ENCODE measurements at regions of chr3 and their contacts with region 1.

Region 1: DNA sequence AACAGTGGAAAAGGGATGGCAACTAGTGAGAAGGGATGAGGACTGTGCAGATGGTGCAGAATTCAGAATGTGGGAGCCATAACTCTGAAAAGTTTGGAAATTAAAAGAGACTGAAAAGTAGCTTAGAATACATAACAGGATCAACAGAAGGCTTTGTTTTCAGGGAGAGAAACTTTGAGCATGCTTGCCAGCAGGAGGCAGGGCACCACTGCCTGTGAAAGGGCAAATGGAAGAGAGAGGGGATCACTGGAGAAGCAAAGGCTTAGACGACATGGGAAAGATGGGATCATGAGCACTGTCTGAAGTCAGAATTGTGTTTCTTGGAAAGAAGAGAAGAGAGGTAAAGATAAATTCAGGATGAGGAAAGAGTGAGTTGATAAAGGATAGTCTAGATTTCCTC is 99.6 kb downstream of the ABI3BP start:
- DNase-seq: peak; percentile 50
- H3K4me3 Mint-ChIP-seq: no peak overlapping the region
- H3K27ac Mint-ChIP-seq: no peak overlapping the region
- H3K4me1 Mint-ChIP-seq: peaks cover 22% of the 10 kb centered on the region
- H3K27me3 Mint-ChIP-seq: no peaks in the 10 kb centered on the region
- CTCF ChIP-seq: peak; percentile 59

Region 2: DNA sequence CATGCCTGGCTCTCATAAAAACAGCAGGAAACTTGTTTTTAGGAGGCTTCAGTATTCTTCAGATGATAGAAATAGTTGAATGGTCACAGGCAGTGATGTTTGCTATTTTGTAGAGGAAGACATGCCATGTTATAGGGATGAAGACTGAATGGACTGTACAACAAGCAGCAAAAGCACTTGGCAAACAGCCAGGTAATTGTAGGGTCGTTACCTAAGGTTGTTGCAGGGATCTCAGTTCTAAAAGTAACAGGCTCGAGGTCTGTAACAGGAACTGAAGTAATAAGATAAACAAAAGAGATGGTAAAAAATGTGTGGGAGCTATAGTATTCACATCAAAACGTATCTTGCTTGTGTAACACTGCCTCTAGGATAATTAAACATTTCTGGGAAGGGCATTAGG is 68.0 kb before region 1 on chr3:
- CTCF ChIA-PET with region 1: no interaction called
- POLR2A ChIA-PET with region 1: no interaction called
- intact Hi-C with region 1: loop called (anchors 5 kb)
- DNase-seq: peak; percentile 23
- H3K4me3 Mint-ChIP-seq: no peak overlapping the region
- H3K27ac Mint-ChIP-seq: no peak overlapping the region
- H3K4me1 Mint-ChIP-seq: no peaks in the 10 kb centered on the region
- H3K27me3 Mint-ChIP-seq: no peaks in the 10 kb centered on the region
- CTCF ChIP-seq: no peak

Region 3: GRCh38 chr3:101189796-101190195 is 296.2 kb after region 1 on chr3:
- CTCF ChIA-PET with region 1: interaction called, 10 read pairs
- POLR2A ChIA-PET with region 1: no interaction called
- intact Hi-C with region 1: no loop called
- DNase-seq: peak; percentile 30
- H3K4me3 Mint-ChIP-seq: no peak overlapping the region
- H3K27ac Mint-ChIP-seq: no peak overlapping the region
- H3K4me1 Mint-ChIP-seq: peaks cover 21% of the 10 kb centered on the region
- H3K27me3 Mint-ChIP-seq: no peaks in the 10 kb centered on the region
- CTCF ChIP-seq: no peak